K562 (cell line): ENCODE measurements at regions of chr13 and their contacts with region 1.

Region 1: GRCh38 chr13:30465585-30466357 is at the start of gene HMGB1:
- DNase-seq: peak; percentile 93 to 97 (median 94)
- ATAC-seq: peak; percentile 96
- H3K4me3 ChIP-seq: peak within 1 kb of the TSS; percentile 85
- H3K27ac ChIP-seq: peak within 1 kb of the TSS; percentile 91
- H3K4me1 ChIP-seq: peaks cover 0 to 11% of the 10 kb centered on the region in 2 experiments; a peak in 3 of 5 replicates
- H3K27me3 ChIP-seq: no peaks in the 10 kb centered on the region
- CTCF ChIP-seq: no peak
- EP300 ChIP-seq: no peak
- POLR2A ChIP-seq: peak; percentile 94
- RAD21 ChIP-seq: no peak
- polyA plus RNA-seq, gene HMGB1: 1,767 to 1,896 TPM

Region 2: GRCh38 chr13:30142486-30143211 is 323.1 kb before region 1 on chr13:
- CTCF ChIA-PET with region 1: no interaction called
- POLR2A ChIA-PET with region 1: no interaction called
- in situ Hi-C with region 1: no loop called
- intact Hi-C with region 1: no loop called
- DNase-seq: no peak
- ATAC-seq: no peak
- H3K4me3 ChIP-seq: no peak overlapping the region
- H3K27ac ChIP-seq: no peak overlapping the region
- H3K4me1 ChIP-seq: no peaks in the 10 kb centered on the region; a peak in 1 of 5 replicates
- H3K27me3 ChIP-seq: peaks cover 5 to 20% of the 10 kb centered on the region in 2 experiments
- CTCF ChIP-seq: no peak
- EP300 ChIP-seq: no peak
- POLR2A ChIP-seq: no peak
- RAD21 ChIP-seq: no peak

Region 3: DNA sequence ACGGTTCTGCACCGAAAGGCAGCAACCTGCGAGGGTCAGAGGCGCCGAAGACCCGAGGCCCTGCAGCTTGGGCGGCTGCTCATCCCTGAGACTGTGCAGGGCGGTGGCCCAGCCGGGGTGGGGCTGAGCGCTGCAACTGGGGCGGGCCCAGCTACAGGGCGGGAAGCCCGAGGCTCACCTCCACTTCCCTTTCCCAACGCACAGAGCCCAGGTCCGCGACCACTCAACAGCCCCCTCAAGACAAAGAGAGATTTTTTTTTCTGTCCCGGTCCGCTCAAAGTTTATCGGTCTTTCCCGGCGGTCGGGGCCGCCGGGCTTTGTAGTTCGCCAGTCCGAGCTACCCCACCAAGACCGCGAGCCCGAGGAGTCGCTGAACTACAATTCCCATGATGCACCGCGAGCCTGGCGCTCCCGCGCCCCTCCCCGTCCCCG is 159.0 kb before region 1 on chr13:
- CTCF ChIA-PET with region 1: no interaction called
- POLR2A ChIA-PET with region 1: interaction called, 5 read pairs
- in situ Hi-C with region 1: no loop called
- intact Hi-C with region 1: loop called (anchors 5 kb)
- DNase-seq: peak; percentile 72 to 93 (median 78)
- ATAC-seq: peak; percentile 88
- H3K4me3 ChIP-seq: peak overlapping the region; percentile 82
- H3K27ac ChIP-seq: peak overlapping the region; percentile 91
- H3K4me1 ChIP-seq: peaks cover 5 to 27% of the 10 kb centered on the region in 2 experiments; a peak in 4 of 5 replicates
- H3K27me3 ChIP-seq: no peaks in the 10 kb centered on the region
- CTCF ChIP-seq: no peak
- EP300 ChIP-seq: no peak
- POLR2A ChIP-seq: no peak
- RAD21 ChIP-seq: no peak

Region 4: GRCh38 chr13:30551189-30551588 is 85.4 kb after region 1 on chr13:
- CTCF ChIA-PET with region 1: no interaction called
- POLR2A ChIA-PET with region 1: no interaction called
- in situ Hi-C with region 1: no loop called
- intact Hi-C with region 1: loop called (anchors 10 kb)
- DNase-seq: peak in 2 of 4 experiments; percentile 14 to 29
- ATAC-seq: peak; percentile 85
- H3K4me3 ChIP-seq: no peak overlapping the region
- H3K27ac ChIP-seq: no peak overlapping the region
- H3K4me1 ChIP-seq: no peaks in the 10 kb centered on the region
- H3K27me3 ChIP-seq: peaks cover 4 to 6% of the 10 kb centered on the region in 2 experiments; a peak in 1 of 5 replicates
- CTCF ChIP-seq: peak; percentile 23 to 53 (median 48); a peak in 3 of 6 replicates
- EP300 ChIP-seq: no peak
- POLR2A ChIP-seq: no peak
- RAD21 ChIP-seq: peak; percentile 49 to 64

Region 5: GRCh38 chr13:30617315-30618185 is 151.8 kb after region 1 on chr13 and contains the start of gene USPL1:
- CTCF ChIA-PET with region 1: no interaction called
- POLR2A ChIA-PET with region 1: interaction called, 13 read pairs
- in situ Hi-C with region 1: no loop called
- intact Hi-C with region 1: loop called (anchors 1 kb)
- DNase-seq: peak; percentile 85 to 96 (median 88)
- ATAC-seq: peak; percentile 91
- H3K4me3 ChIP-seq: peak within 1 kb of the TSS; percentile 72
- H3K27ac ChIP-seq: peak within 1 kb of the TSS; percentile 99
- H3K4me1 ChIP-seq: peaks cover 5 to 7% of the 10 kb centered on the region in 2 experiments; a peak in 2 of 5 replicates
- H3K27me3 ChIP-seq: no peaks in the 10 kb centered on the region
- CTCF ChIP-seq: peak; percentile 2 to 18 (median 6); a peak in 2 of 6 replicates
- EP300 ChIP-seq: no peak
- POLR2A ChIP-seq: peak; percentile 85
- RAD21 ChIP-seq: no peak
- polyA plus RNA-seq, gene USPL1: 5.5 to 12.0 TPM

Region 6: GRCh38 chr13:30673669-30674521 is 208.1 kb after region 1 on chr13:
- CTCF ChIA-PET with region 1: no interaction called
- POLR2A ChIA-PET with region 1: no interaction called
- in situ Hi-C with region 1: no loop called
- intact Hi-C with region 1: loop called (anchors 10 kb)
- DNase-seq: peak; percentile 85 to 89 (median 86)
- ATAC-seq: peak; percentile 97
- H3K4me3 ChIP-seq: peak overlapping the region; percentile 57
- H3K27ac ChIP-seq: peak overlapping the region; percentile 81; the same call in 2 of the 3 replicates
- H3K4me1 ChIP-seq: peaks cover 5 to 9% of the 10 kb centered on the region in 2 experiments; a peak in 4 of 5 replicates
- H3K27me3 ChIP-seq: no peaks in the 10 kb centered on the region
- CTCF ChIP-seq: peak; percentile 53 to 77 (median 58)
- EP300 ChIP-seq: no peak
- POLR2A ChIP-seq: peak; percentile 51
- RAD21 ChIP-seq: peak; percentile 26 to 39; a peak in 3 of 4 replicates